Activated CD4-positive, alpha-beta T cell treated with anti-CD3 and anti-CD28 coated beads, Interleukin-2, amount 10 ng/mL, durations not matched to agents 24 days and 14 days (primary cell): ENCODE measurements at regions of chr11 and their contacts with region 1.

Region 1: DNA sequence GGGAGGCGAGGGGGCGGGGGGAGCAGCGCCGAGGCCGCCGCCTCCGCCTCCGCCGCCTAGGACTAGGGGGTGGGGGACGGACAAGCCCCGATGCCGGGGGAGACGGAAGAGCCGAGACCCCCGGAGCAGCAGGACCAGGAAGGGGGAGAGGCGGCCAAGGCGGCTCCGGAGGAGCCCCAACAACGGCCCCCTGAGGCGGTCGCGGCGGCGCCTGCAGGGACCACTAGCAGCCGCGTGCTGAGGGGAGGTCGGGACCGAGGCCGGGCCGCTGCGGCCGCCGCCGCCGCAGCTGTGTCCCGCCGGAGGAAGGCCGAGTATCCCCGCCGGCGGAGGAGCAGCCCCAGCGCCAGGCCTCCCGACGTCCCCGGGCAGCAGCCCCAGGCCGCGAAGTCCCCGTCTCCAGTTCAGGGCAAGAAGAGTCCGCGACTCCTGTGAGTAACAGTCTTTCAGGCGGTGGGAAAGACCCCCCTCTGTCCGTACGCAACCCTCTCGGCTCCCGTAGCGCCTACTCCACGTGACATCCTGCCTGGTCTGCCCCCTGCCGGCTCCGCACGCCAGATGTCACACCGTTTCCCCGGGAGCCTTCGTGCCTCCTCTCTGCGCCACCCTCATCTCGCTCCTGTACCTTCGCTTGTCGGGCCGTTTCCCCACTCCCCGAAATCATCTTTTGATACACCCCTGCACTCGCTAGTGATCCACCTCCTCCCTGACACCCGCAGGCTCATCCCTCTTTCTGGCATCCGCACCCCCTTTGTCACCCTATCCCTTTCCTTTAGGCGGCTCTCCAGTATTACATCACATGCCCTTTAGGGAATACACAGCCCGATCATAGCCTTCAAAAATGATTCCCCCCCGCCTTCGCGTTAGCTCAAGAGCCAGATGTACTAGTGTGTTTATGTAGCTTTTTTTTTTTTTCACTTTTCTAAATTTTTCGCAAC is 598 bp downstream of the ZFP91 start:
- DNase-seq: peak; percentile 97
- H3K4me3 Mint-ChIP-seq: peak overlapping the region; percentile 93
- H3K27ac Mint-ChIP-seq: peak overlapping the region; percentile 100
- H3K4me1 Mint-ChIP-seq: peaks cover 66% of the 10 kb centered on the region
- H3K27me3 Mint-ChIP-seq: peaks cover 4% of the 10 kb centered on the region

Region 2: GRCh38 chr11:57567515-57568329 is 1011.7 kb before region 1 on chr11 and contains the start of gene UBE2L6:
- intact Hi-C with region 1: loop called (anchors 2 kb)
- DNase-seq: peak; percentile 89
- H3K4me3 Mint-ChIP-seq: peak within 1 kb of the TSS; percentile 99
- H3K27ac Mint-ChIP-seq: peak within 1 kb of the TSS; percentile 97
- H3K4me1 Mint-ChIP-seq: peaks cover 40% of the 10 kb centered on the region
- H3K27me3 Mint-ChIP-seq: no peaks in the 10 kb centered on the region
- total RNA-seq, gene UBE2L6: 151 and 157 TPM in 2 replicates

Region 3: DNA sequence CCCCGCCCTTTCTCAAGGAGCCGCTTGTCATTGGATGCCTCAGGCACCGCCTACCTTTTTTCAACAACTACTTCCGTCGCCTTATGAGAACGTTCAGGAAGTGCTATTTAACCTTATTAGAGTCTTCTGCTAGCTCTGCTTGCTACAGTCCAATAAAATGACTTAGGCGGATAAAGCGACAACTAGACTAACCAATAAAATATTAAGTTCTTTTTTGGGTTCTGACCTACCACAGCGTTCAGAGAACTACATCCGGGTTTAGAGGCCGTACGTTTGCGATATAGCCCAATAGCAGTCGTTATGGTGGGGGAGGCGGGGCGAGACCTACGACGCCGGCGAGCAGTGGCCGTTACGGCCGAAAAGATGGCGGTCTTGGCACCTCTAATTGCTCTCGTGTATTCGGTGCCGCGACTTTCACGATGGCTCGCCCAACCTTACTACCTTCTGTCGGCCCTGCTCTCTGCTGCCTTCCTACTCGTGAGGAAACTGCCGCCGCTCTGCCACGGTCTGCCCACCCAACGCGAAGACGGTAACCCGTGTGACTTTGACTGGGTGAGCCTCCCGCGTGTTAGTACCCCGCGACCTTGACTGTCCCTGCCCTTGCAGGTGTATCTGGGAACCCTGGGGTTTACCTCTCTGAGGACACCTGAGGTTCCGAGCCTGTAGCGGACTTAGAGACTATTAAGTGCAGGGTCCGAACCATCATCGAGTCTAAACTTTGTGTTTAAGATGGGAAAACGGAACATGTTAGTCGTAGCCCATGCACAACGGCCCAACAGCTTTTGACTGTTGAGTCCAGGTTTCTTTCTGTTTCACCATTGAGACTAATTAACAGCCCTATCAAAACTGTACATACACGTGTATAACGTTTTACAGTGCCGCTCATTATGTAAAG is 867.0 kb before region 1 on chr11 and contains the start of gene TMX2:
- intact Hi-C with region 1: loop called (anchors 1 kb)
- DNase-seq: peak; percentile 97
- H3K4me3 Mint-ChIP-seq: peak within 1 kb of the TSS; percentile 95
- H3K27ac Mint-ChIP-seq: peak within 1 kb of the TSS; percentile 96
- H3K4me1 Mint-ChIP-seq: peaks cover 39% of the 10 kb centered on the region
- H3K27me3 Mint-ChIP-seq: no peaks in the 10 kb centered on the region
- total RNA-seq, gene TMX2: 99.0 and 99.2 TPM in 2 replicates

Region 4: GRCh38 chr11:58513747-58514367 is 65.6 kb before region 1 on chr11:
- intact Hi-C with region 1: no loop called
- DNase-seq: peak; percentile 59
- H3K4me3 Mint-ChIP-seq: no peak overlapping the region
- H3K27ac Mint-ChIP-seq: no peak overlapping the region
- H3K4me1 Mint-ChIP-seq: no peaks in the 10 kb centered on the region
- H3K27me3 Mint-ChIP-seq: no peaks in the 10 kb centered on the region

Region 5: DNA sequence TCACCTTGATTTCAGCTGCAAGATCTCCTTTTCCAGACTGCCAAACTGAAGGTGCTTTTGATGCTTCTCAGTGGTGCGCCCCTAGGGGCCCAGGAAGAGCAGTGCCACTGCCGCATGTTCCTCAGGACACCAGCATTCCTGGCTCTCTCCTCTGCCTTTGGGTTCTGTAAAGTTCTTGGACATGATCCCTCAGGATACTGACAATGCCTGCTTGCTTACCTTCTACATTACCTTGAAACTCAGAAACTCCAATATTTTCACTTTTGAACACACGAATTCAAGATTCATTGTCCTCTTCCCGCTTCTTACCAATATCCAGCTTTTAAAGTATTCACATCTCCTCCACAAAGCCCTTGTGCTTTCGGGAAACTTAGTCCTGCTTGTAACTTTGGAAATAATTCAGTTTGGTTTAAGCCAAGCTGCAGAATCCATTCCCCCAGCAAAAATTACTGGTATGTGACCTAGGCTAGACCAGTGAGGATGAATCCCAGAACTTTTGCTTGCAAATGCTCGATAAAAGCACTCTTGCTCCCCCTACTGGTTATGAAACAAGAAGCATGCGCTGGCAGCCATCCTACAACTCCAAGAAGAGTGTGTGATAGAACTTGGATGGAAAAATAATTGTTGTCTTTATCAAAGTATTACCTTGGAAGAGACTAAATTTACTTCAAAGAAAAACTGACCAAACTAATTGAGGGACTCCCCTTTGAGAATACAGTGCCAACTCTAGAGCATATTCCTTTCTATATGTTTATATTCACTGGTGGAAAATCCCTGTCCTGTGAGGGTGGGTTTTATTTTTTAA is 55.0 kb before region 1 on chr11:
- intact Hi-C with region 1: loop called (anchors 1 kb)
- DNase-seq: peak; percentile 84
- H3K4me3 Mint-ChIP-seq: peak overlapping the region; percentile 79
- H3K27ac Mint-ChIP-seq: peak overlapping the region; percentile 91
- H3K4me1 Mint-ChIP-seq: peaks cover 22% of the 10 kb centered on the region
- H3K27me3 Mint-ChIP-seq: no peaks in the 10 kb centered on the region

Region 6: DNA sequence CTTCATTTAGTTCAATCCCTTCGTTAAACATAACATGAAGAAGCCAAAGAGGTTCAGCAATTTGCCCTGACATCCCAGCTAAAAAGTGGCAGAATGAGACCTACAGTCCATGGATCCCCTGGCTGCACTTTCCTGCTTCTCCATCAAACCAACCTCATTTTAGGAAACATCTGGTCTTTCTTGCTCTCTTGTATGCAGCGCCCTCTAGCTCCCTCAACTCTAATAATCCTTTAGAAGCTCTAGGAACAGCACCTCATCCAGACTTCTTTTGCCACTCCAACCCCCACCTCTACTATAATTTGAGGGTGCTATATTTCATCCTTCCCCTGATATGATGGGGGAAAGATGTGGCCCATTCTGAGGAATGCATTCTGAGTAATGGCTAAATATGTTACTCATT is 50.4 kb after region 1 on chr11:
- intact Hi-C with region 1: loop called (anchors 2 kb)
- DNase-seq: peak; percentile 63
- H3K4me3 Mint-ChIP-seq: no peak overlapping the region
- H3K27ac Mint-ChIP-seq: no peak overlapping the region
- H3K4me1 Mint-ChIP-seq: no peaks in the 10 kb centered on the region
- H3K27me3 Mint-ChIP-seq: no peaks in the 10 kb centered on the region

Region 7: DNA sequence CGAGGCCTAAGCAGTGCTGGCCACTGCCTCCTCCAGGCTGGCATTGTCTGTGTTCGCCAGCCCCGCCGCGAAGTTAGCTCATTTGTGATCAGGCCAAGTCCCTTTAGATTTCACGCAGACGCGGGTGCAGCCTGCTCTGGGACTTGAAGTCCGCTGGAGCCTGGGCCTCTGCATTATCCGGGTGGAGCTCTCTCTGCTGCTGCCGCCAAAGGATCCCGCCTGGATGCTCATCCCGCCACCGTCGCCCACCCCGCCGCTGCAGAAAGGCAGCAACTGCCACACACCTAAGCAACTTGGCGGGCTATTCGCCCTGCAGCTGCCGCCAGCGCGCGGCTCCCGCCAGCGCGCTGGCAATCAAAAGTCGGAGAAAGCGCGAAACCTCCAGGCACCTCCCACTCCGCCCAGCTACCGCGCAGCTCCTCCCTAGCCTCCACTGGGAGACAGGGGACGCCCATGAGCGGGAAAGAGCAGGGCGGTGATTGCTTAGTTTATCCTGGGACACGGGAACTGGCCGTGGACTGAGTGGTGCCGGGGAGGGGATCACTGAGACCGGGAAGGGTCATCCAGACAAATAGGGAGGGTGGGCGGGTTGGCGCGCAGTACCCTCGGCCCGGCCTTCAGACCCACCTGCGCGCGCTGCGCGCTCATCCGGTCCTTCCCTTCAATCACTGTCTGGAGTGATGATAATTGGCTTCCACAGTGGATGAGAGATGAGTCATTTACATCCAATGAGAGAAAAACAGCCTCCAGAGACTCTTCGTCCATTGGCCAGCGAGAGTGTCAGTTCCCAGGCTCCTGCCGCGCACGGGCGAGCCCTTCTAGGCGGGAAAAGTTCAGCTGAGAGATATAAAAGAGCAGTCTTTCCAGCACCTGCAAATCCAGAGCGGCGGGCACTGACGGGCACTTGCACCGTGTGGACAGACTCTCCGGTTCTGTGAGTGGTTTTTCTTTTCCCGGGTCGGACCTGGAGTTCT is 527.2 kb after region 1 on chr11 and contains the start of gene FAM111B:
- intact Hi-C with region 1: loop called (anchors 2 kb)
- DNase-seq: peak; percentile 93
- H3K4me3 Mint-ChIP-seq: peak within 1 kb of the TSS; percentile 94
- H3K27ac Mint-ChIP-seq: peak within 1 kb of the TSS; percentile 85
- H3K4me1 Mint-ChIP-seq: peaks cover 66% of the 10 kb centered on the region
- H3K27me3 Mint-ChIP-seq: no peaks in the 10 kb centered on the region
- total RNA-seq, gene FAM111B: 68.4 and 70.1 TPM in 2 replicates

Region 8: GRCh38 chr11:59615637-59616395 is 1036.4 kb after region 1 on chr11 and contains the start of gene OSBP:
- intact Hi-C with region 1: loop called (anchors 2 kb)
- DNase-seq: peak; percentile 99
- H3K4me3 Mint-ChIP-seq: peak within 1 kb of the TSS; percentile 94
- H3K27ac Mint-ChIP-seq: peak within 1 kb of the TSS; percentile 91
- H3K4me1 Mint-ChIP-seq: peaks cover 43% of the 10 kb centered on the region
- H3K27me3 Mint-ChIP-seq: no peaks in the 10 kb centered on the region
- total RNA-seq, gene OSBP: 39.7 and 40.1 TPM in 2 replicates